Dorsolateral prefrontal cortex (tissue), 120 donors: ENCODE measurements at regions of chr7 and their contacts with region 1.

Region 1: DNA sequence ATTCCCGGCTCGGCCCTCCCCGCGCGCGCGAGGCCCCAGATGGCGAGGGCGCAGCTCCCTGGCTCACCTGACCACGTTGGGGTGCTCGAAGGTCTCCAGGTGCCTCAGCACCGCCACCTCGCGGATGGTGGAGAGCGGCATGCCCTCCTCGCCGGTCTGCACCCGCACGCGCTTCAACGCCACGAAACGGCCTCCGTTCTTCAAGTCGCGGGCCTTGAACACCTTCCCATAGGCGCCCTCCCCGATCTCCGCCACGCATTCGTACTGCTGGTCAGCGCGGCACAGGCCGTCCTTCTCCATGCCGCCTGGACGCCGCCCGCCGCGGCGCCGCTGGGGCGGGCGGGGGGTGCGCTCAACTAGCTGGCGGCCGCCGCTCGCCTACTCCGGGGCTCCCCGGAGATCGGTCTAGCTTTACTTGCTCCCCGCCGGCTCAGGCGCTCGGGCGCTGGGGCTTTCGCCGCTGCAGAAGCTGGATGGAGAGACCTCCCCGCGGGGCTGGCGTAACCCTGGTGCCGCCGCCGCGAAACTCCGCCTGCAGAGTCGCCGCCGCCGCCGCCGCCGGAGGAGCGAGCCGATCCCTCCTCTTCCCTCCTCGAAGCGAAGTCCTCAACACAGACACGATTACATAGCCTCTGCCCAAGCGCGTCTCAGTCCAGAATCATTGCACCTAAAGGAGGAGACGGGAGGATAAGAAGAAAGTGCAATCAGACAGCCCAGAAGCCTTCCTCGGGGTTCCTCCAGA is 3.2 kb downstream of the CDK6 start:
- DNase-seq: peak; percentile 63 to 86 (median 81)
- H3K4me3 ChIP-seq: peak overlapping the region; percentile 60 to 97 (median 85)
- H3K27ac ChIP-seq: peak overlapping the region; percentile 55 to 97 (median 90)
- H3K27me3 ChIP-seq: peaks cover 0 to 4% (median 0%) of the 10 kb centered on the region in 45 donors
- CTCF ChIP-seq: peak; percentile 64 to 96 (median 86)

Region 2: DNA sequence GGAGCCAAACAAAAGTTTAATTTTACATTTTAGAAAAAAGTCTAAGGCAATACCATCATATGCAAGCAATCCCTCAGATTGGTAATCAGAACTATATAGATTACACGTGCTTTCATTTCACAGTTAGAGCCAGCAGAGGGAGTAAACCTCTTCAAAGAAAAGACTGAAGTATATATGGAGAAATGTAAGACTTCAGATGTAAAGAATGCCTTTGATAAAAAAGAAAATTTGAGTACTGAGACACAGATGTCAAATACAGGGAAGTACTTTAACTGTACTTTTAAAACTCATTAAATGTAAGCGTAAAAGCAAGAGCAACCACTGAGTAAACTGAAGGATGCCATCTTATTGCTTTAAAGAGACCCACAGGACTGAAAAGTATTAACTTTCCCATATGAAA is 141.6 kb before region 1 on chr7:
- intact Hi-C with region 1: loop called (anchors 2 to 5 kb)
- DNase-seq: no peak
- H3K4me3 ChIP-seq: no peak overlapping the region
- H3K27ac ChIP-seq: peak overlapping the region in 6 of 59 donors; percentile 10 to 50 (median 36)
- H3K27me3 ChIP-seq: no peaks in the 10 kb centered on the region
- CTCF ChIP-seq: peak; percentile 36 to 78 (median 62)

Region 3: DNA sequence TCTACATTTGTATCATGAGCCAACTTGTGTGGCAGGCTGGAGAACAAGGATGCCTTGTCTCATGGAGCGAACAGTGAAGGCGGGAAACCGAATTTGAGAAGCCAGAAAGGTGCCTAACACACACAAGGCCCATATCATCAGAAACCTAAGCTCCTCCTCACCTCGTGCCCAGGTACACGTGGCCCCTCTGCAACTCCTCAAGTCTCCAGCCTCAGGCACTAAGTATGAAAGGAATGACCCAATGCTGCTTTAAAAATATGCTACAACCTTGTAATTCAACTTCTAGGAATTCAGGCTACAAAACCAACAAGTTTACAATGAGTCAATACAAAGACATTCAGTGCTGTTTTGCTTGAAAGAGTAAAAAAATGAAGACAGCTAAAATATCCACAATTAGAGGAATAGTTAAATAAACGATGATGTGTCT is 92.5 kb before region 1 on chr7:
- intact Hi-C with region 1: no loop called
- DNase-seq: no peak
- H3K4me3 ChIP-seq: no peak overlapping the region
- H3K27ac ChIP-seq: peak overlapping the region in 1 of 59 donors; percentile 14
- H3K27me3 ChIP-seq: no peaks in the 10 kb centered on the region
- CTCF ChIP-seq: no peak

Region 4: DNA sequence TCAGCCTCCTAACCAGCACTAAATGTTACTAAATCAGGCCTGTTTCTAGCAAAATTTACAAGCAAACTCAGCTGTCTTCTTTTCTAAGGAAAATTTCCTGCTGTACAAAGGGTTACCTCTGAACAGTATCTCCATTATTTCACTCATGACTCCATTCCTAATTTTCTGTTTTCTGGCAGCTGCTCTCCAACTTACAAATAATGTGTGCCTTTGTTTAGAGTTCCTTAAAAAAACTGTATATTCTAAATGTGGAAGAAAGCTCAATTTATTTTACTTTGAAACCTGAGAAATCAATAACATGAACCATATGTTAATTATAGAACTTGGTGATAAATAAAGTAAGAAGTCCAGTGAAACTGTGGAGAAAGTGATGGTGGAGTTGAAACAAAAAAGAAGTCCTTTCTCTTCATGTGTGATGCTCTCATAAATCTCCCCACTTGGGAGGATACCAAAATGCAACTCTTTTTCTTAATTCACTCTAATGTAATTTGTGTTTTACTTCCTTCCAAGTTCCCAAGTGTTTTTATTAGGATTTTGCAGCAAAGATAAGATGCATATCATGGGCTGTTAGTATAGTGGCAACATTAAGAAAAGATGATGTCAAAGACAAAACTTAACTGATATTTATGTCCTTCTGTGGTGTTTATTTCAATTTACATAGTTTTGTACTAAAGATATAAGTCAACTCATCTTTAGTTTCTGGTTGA is 71.7 kb before region 1 on chr7:
- intact Hi-C with region 1: loop called (anchors 2 to 5 kb)
- DNase-seq: no peak
- H3K4me3 ChIP-seq: peak overlapping the region in 6 of 59 donors; percentile 1 to 25 (median 4)
- H3K27ac ChIP-seq: peak overlapping the region in 58 of 59 donors; percentile 27 to 91 (median 82)
- H3K27me3 ChIP-seq: no peaks in the 10 kb centered on the region
- CTCF ChIP-seq: no peak

Region 5: DNA sequence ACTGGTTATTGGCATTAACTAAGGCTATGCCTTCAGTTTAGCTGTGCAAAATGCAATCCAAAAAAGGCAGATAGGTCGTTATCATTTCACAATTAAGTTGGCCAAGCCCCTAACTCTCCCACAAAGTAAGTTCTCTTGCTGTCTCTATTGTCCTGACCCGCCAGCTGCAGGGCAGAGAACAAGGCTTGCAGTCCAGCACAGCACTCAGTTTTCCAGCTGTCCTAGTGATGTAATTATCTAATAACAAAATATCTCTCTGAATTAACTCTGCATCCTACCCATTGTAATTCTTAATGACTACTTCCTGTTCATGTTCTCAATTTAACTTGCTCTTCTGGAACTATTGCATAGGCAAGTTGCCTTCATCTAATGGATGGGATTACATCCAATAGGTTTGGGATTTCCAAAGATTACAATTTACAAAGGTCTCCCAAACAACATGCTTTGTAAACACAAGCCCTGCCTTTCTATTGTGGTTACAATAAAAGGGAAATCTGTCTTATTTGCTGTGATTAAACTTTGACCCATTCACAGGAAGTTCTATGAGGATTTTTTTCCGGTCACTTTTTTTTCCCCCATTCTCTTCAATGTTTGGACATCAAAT is 52.0 kb before region 1 on chr7:
- intact Hi-C with region 1: loop called in 1 of 2 experiments (anchors 5 kb)
- DNase-seq: peak in 9 of 10 donors; percentile 32 to 82 (median 62)
- H3K4me3 ChIP-seq: peak overlapping the region in 7 of 59 donors; percentile 1 to 42 (median 11)
- H3K27ac ChIP-seq: peak overlapping the region in 58 of 59 donors; percentile 5 to 94 (median 80)
- H3K27me3 ChIP-seq: no peaks in the 10 kb centered on the region
- CTCF ChIP-seq: peak in 6 of 56 donors; percentile 2 to 23 (median 10)